Activated CD4-positive, alpha-beta memory T cell treated with anti-CD3 and anti-CD28 coated beads, Interleukin-2, amount 10 ng/mL, durations not matched to agents 7 days and 5 days (primary cell): ENCODE measurements at regions of chr1 and their contacts with region 1.

Region 1: DNA sequence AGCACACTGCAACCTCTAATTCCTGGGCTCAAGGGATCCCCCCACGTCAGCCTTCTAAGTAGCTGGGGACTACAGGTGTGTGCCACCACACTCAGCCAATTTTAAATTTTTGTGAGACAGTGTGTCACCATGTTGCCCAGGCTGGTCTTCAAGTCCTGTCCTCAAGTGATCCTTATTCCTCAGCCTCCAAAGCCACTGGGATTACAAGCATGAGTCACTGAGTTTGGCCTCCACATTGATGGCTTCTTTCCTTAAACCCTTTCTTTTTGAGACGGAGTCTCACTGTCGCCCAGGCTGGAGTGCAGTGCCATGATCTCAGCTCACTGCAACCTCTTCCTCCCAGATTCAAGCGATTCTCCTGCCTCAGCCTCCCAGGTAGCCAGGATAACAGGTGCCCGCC is 7.6 kb downstream of the KPNA6 start:
- DNase-seq: no peak
- H3K4me3 Mint-ChIP-seq: no peak overlapping the region
- H3K27ac Mint-ChIP-seq: no peak overlapping the region
- H3K4me1 Mint-ChIP-seq: peaks cover 33% of the 10 kb centered on the region
- H3K27me3 Mint-ChIP-seq: no peaks in the 10 kb centered on the region

Region 2: GRCh38 chr1:32031578-32032274 is 83.8 kb before region 1 on chr1:
- CTCF ChIA-PET with region 1: no interaction called
- POLR2A ChIA-PET with region 1: no interaction called
- DNase-seq: no peak
- H3K4me3 Mint-ChIP-seq: no peak overlapping the region
- H3K27ac Mint-ChIP-seq: no peak overlapping the region
- H3K4me1 Mint-ChIP-seq: peaks cover 29% of the 10 kb centered on the region
- H3K27me3 Mint-ChIP-seq: no peaks in the 10 kb centered on the region

Region 3: DNA sequence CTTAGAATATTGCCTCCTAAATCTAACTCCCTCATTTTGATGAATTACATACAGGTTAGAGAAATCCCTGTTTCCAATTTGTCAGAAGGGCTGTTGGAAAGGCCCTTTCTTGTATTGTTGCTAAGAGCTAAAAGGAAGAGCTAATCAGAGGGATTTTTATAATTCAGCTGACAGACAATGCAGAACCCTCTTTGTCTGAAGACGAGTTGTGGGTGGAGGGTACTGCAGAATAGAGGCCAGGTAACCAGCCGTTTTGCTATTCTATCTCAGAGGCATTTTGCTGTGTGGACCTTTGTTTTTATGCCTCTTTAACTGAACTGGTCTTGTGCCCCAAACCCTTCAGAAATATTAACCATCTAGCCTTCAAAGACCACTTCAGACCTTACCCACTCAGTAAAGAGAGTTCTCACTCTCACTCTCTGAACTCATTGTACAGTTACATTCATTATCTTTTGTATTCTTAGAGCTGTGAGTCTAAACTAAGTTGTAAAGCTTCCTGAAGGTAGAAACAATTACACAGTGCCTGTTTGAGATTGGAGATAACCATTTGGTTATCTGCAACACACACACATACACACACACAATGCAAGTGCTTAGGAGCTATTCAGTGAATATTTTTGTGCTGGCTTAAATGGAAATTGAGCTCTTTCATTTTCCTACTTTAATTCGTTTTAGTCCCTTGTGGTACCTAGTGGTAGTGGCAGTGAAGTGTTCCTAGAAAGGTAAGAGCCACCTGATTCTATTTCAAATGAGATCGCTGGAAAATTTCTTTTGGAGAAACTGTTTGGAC is 12.1 kb after region 1 on chr1:
- CTCF ChIA-PET with region 1: interaction called, 10 read pairs
- POLR2A ChIA-PET with region 1: interaction called, 6 read pairs
- DNase-seq: no peak
- H3K4me3 Mint-ChIP-seq: no peak overlapping the region
- H3K27ac Mint-ChIP-seq: no peak overlapping the region
- H3K4me1 Mint-ChIP-seq: peaks cover 21% of the 10 kb centered on the region
- H3K27me3 Mint-ChIP-seq: no peaks in the 10 kb centered on the region

Region 4: GRCh38 chr1:32568929-32569328 is 453.4 kb after region 1 on chr1:
- CTCF ChIA-PET with region 1: no interaction called
- POLR2A ChIA-PET with region 1: no interaction called
- DNase-seq: no peak
- H3K4me3 Mint-ChIP-seq: no peak overlapping the region
- H3K27ac Mint-ChIP-seq: no peak overlapping the region
- H3K4me1 Mint-ChIP-seq: no peaks in the 10 kb centered on the region
- H3K27me3 Mint-ChIP-seq: peaks cover 7% of the 10 kb centered on the region